T-cell (primary cell): ENCODE measurements at regions of chr5 and their contacts with region 1.

Region 1: DNA sequence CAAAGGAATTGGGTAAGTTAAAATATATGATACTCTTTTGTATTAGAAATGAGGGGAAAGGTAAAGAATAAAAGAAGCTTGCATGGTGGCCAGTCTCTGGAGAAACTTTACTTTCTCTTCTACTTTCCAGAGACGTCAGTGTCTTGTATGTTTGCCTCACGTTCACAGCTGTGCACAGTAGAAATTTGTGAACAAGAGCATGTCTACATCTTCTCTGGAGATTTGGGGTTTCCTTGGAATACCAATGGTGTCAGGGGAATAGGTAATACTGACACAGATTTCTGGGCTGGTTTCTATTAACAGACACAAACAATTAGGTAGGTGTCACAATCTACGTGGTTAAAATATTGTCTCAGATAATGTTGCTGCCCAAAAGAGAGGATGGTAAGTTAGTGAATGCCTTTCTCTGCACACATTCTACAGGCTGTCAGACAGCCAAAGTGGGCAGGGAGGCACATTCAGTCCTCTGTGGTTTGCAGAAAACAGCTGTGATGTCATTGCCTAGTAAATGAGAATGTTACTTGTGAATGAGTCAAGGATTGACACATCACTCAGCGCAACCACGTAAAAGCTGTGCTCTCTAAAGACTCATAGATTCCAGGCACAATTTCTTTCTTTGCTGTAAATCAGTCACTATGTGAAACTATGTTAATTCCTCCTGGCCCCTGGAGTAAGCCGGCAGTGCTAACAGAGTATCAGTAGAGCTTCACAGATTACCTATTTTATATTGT is 397.1 kb downstream of the MAN2A1 start:
- DNase-seq: peak in 18 of 35 experiments; percentile 0 to 26 (median 8)
- ATAC-seq: peak in 3 of 4 experiments; percentile 15 to 77 (median 55)
- H3K4me3 ChIP-seq: no peak overlapping the region
- H3K4me3 Mint-ChIP-seq: no peak overlapping the region
- H3K27ac ChIP-seq: no peak overlapping the region
- H3K27ac Mint-ChIP-seq: no peak overlapping the region
- H3K4me1 ChIP-seq: no peaks in the 10 kb centered on the region
- H3K4me1 Mint-ChIP-seq: peaks cover 5 to 13% (median 9%) of the 10 kb centered on the region in 3 donors
- H3K27me3 ChIP-seq: no peaks in the 10 kb centered on the region
- H3K27me3 Mint-ChIP-seq: no peaks in the 10 kb centered on the region

Region 2: GRCh38 chr5:110019780-110020179 is 67.0 kb before region 1 on chr5:
- CTCF ChIA-PET with region 1: interaction called in 1 of 2 experiments, 12 read pairs
- POLR2A ChIA-PET with region 1: no interaction called
- DNase-seq: no peak
- ATAC-seq: no peak
- H3K4me3 ChIP-seq: no peak overlapping the region
- H3K4me3 Mint-ChIP-seq: no peak overlapping the region
- H3K27ac ChIP-seq: no peak overlapping the region
- H3K27ac Mint-ChIP-seq: no peak overlapping the region
- H3K4me1 ChIP-seq: no peaks in the 10 kb centered on the region
- H3K4me1 Mint-ChIP-seq: no peaks in the 10 kb centered on the region
- H3K27me3 ChIP-seq: peaks cover 0 to 11% of the 10 kb centered on the region in 2 experiments
- H3K27me3 Mint-ChIP-seq: no peaks in the 10 kb centered on the region